Activated CD8-positive, alpha-beta T cell treated with anti-CD3 and anti-CD28 coated beads, Interleukin-2, amount 10 ng/mL, durations not matched to agents 7 days and 5 days (primary cell): ENCODE measurements at regions of chr10 and their contacts with region 1.

Region 1: GRCh38 chr10:27446091-27446918 is 57.8 kb upstream of the RAB18 start:
- DNase-seq: no peak
- ATAC-seq: peak; percentile 47
- H3K4me3 Mint-ChIP-seq: no peak overlapping the region
- H3K27ac Mint-ChIP-seq: no peak overlapping the region
- H3K4me1 Mint-ChIP-seq: peaks cover 11% of the 10 kb centered on the region
- H3K27me3 Mint-ChIP-seq: no peaks in the 10 kb centered on the region

Region 2: DNA sequence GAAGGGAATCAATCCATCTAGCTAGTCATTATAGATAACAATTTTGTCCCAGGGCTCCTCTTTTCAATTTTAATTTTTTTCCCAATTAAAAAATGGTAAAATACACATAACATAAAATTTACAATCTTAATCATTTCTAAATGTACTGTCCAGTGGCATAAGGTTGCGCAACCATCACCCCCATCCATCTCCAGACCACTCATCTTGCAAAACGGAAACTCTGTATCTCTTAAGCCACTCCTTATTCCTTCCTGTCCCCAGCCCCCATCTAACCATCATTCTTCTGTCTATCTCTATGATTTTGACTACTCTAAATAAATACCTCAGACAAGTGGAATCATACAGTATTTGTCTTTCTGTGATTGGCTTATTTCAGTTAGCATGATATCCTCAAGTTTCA is 11.7 kb after region 1 on chr10:
- CTCF ChIA-PET with region 1: interaction called, 16 read pairs
- POLR2A ChIA-PET with region 1: no interaction called
- DNase-seq: no peak
- ATAC-seq: no peak
- H3K4me3 Mint-ChIP-seq: no peak overlapping the region
- H3K27ac Mint-ChIP-seq: peak overlapping the region; percentile 6
- H3K4me1 Mint-ChIP-seq: peaks cover 13% of the 10 kb centered on the region
- H3K27me3 Mint-ChIP-seq: no peaks in the 10 kb centered on the region

Region 3: DNA sequence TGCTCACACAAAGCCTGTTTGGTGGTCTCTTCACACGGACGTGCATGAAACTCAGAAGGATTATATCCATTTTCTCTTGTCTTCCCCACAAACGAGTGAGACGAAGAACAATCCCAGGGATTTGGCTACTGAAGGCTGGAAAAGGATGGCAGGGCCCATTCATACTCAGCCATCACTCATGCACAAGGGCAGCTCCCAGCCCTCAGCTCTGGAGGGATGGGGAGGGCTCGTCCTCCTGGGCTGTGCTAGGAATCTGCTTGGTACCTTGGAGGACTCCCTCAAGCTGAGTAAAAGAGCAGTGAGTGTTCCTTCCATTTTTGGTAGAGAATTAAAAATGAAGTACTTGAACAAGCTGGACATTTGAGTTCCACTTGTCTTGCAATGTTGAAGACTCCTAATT is 24.6 kb after region 1 on chr10:
- CTCF ChIA-PET with region 1: no interaction called
- POLR2A ChIA-PET with region 1: no interaction called
- DNase-seq: no peak
- ATAC-seq: no peak
- H3K4me3 Mint-ChIP-seq: no peak overlapping the region
- H3K27ac Mint-ChIP-seq: no peak overlapping the region
- H3K4me1 Mint-ChIP-seq: peaks cover 5% of the 10 kb centered on the region
- H3K27me3 Mint-ChIP-seq: peaks cover 12% of the 10 kb centered on the region

Region 4: GRCh38 chr10:27655296-27655695 is 209.0 kb after region 1 on chr10:
- CTCF ChIA-PET with region 1: interaction called, 12 read pairs
- POLR2A ChIA-PET with region 1: no interaction called
- DNase-seq: no peak
- ATAC-seq: no peak
- H3K4me3 Mint-ChIP-seq: no peak overlapping the region
- H3K27ac Mint-ChIP-seq: no peak overlapping the region
- H3K4me1 Mint-ChIP-seq: no peaks in the 10 kb centered on the region
- H3K27me3 Mint-ChIP-seq: no peaks in the 10 kb centered on the region